Posterior cingulate gyrus (tissue), 11 donors: ENCODE measurements at regions of chr2 and their contacts with region 1.

Region 1: GRCh38 chr2:33033606-33034081 is 86.9 kb downstream of the LTBP1 start:
- DNase-seq: peak in 1 of 10 donors; percentile 14

Region 2: DNA sequence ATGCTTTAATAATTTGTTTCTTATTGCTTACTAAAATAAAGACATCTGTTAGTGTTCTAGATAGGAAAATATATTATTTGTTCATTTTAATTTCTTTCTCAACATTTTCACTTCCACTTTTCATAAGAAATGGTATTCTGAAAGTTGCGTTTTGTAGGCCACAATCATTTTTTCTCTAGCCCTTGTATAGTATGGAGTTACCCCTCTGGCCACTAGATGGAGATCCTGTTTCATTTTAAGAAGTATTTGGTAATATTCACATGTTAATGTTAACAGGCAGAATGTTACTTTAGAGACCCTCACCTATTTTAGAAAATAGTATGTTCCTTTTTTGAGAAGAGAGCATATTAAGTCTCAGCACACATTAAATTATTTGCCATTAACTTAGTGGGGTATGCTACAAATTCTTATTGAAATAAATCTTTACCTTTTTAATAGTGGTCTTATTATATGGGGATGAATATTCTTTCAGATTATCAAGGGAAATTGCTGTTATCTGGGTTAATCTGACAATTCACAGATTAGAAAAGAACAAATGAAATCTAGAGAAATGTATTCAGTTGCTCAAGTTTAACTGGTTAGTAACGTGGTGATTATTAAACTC is 479.7 kb before region 1 on chr2:
- intact Hi-C with region 1: loop called (anchors 5 kb)
- DNase-seq: no peak

Region 3: GRCh38 chr2:32946314-32947075 is 87.1 kb before region 1 on chr2 and contains the start of gene LTBP1:
- intact Hi-C with region 1: loop called (anchors 5 kb)
- DNase-seq: peak in 9 of 10 donors; percentile 39 to 94 (median 56)

Region 4: DNA sequence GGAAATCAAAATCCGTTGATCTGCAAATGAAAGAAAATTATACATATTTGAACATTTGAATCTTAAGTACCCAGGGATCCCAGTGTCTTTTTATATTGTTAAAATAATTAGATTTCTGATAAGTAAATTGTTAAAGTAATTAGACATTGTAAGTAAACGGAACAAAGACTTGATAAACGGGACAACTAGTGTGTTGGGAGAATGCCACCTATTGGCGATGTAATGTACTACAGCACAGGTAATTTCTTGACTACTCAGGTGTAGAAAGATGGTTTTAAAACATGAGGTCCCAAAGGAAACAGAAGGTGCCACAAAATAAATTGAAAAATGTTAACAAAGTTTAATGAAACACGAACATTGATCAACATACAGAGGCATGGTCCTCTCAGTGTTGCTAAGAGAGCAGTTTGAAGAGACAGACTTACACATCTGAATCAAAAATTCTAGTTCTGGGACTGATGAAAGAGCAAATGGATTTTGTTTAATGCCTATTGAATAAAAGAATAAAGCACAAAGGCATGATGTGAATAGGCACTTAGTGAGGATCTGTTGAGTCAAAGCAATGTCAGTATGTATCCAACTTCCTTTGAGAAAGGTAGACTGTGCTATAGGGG is 339.4 kb after region 1 on chr2:
- intact Hi-C with region 1: loop called (anchors 5 kb)
- DNase-seq: no peak

Region 5: DNA sequence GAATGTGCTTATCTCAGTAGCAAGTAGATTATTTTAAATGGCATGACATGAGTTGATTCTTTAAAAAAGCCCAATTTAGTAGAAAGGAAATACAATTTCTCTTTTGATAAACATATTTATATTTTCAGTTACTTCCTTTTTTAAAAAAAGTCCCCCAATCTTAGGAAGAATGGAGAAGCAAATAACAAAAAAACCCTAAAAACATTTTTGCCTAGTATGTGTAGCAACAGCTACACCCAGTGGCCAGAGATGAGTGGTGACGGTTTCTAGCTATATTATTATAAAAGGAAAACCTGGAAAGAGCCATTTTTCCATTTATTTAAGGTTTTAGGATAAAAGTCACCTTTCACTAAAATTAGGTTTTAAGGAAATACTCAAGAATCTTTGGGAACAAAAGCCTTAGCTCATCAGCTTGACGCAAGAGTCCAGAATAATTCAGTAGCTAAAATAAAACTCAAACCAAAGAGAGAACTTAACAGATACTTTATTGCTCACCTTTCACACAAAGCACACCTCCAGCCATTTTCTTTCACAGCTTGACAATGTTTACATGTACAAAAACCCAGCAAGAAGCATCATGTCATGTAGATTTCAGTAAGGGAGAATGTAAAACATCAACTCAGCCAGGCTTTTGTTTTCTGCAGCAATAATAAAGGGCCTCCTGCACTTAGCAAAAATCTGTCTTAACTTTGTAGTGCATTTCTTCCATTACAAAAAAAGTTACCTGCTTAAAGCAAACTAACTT is 549.7 kb after region 1 on chr2:
- intact Hi-C with region 1: loop called (anchors 5 kb)
- DNase-seq: peak in 3 of 10 donors; percentile 48 to 81 (median 49)